ENCODE measurements at regions of chr1 and their contacts with region 1.

Region 1: DNA sequence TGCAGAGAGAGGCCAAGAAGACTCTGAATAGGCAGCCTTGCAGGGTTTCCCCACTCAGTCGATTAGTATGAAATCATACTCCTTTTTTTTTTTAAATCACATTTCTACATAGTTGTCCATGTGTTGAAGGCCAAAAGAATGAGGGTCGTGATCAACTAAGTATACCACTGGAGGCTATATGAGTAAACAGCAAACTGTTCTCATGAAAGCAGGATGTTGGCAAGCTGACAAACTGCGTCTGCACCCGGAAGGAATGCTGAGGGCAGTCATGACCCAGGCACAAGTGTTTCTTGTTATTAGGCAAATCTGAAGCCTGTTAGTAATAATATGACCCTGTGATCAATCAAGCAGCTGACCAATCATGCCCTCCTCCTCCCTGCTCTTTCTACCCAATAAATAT is 213.2 kb downstream of the USH2A start:
- DNase-seq: no peak
- H3K4me3 ChIP-seq: no peak overlapping the region
- H3K27ac ChIP-seq: no peak overlapping the region
- H3K4me1 ChIP-seq: no peaks in the 10 kb centered on the region
- H3K27me3 ChIP-seq: peaks cover 27% of the 10 kb centered on the region
- CTCF ChIP-seq: no peak

Region 2: GRCh38 chr1:215360758-215361157 is 849.3 kb before region 1 on chr1:
- CTCF ChIA-PET with region 1: no interaction called
- POLR2A ChIA-PET with region 1: no interaction called
- intact Hi-C with region 1: no loop called
- DNase-seq: no peak
- H3K4me3 ChIP-seq: no peak overlapping the region
- H3K27ac ChIP-seq: no peak overlapping the region
- H3K4me1 ChIP-seq: no peaks in the 10 kb centered on the region
- H3K27me3 ChIP-seq: no peaks in the 10 kb centered on the region
- CTCF ChIP-seq: no peak

Region 3: DNA sequence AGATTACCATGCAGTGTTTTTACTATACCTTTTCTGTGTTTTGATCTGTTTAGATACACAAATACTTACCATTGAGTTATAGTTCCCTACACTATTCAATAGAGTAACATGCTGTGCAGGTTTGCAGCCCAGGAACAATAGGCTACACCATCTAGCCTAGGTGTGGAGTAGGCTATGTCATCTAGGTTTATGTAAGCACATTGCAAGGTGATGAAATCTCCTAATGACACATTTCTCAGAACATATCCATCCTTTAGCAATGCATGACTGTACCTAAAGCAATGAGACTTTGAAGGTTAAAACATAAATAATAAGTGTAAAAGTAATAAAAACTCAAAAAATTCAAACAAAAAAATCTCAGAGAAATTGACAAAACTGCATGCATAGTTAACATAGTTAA is 145.4 kb before region 1 on chr1:
- CTCF ChIA-PET with region 1: interaction called, 10 read pairs
- POLR2A ChIA-PET with region 1: no interaction called
- intact Hi-C with region 1: no loop called
- DNase-seq: no peak
- H3K4me3 ChIP-seq: no peak overlapping the region
- H3K27ac ChIP-seq: no peak overlapping the region
- H3K4me1 ChIP-seq: no peaks in the 10 kb centered on the region
- H3K27me3 ChIP-seq: no peaks in the 10 kb centered on the region
- CTCF ChIP-seq: no peak